Adrenal gland (tissue), 19 donors: ENCODE measurements at regions of chr6 and their contacts with region 1.

Region 1: GRCh38 chr6:30483677-30484279 is 5.5 kb upstream of the HLA-E start:
- DNase-seq: peak in 3 of 7 donors; percentile 52 to 64 (median 63)
- H3K4me3 ChIP-seq: no peak overlapping the region
- H3K27ac ChIP-seq: no peak overlapping the region
- H3K4me1 ChIP-seq: peaks cover 0 to under 1% of the 10 kb centered on the region in 2 donors
- H3K27me3 ChIP-seq: peaks cover 31% of the 10 kb centered on the region
- CTCF ChIP-seq: peak; percentile 46 to 74 (median 66)
- POLR2A ChIP-seq: no peak

Region 2: DNA sequence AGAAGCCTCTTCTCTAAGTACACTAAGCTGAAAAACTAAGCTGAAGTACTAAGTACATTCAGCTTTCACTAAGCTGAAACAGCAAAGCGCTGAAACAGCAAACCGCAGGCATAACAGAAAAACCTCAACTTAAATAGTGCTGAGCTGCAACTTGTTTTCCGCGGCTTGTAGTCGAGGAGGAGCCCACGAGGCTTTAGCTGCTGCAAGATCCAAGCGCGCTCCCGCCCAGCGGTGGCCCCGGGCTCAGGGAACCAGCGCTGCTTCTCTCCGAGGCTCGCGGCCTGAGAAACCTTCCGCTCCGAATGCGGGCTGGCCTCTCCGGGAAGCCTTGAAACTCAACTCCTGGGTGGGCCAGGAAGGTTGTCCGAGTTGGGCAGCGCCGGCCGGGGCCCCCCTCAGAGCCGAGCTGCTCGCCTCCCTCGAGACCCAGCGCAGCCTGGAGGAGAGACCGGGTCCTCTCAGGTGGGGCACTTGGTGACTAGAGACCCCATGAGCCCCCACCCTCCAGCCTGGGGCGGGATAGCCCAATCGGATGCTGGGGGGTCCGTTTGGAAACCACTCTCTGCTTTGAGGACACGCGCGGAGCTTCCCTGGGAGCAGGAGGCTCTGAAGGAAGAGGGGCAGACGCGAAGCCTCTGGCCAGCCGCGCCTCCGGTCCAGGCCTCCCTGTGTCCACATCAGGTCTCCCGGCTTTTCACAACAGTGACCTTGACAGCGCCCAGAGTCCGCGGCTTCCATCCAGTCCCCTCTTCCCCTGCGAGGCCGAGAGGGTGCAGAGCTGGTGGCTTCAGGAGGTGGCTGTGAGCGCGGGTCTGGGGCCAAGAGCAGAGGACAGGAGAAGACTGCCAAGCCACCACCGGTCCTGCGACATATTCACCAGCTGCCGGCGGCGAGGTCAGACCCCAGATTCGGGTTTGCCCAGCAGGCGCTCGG is 32.6 kb before region 1 on chr6:
- intact Hi-C with region 1: no loop called
- DNase-seq: peak in 5 of 7 donors; percentile 41 to 65 (median 59)
- H3K4me3 ChIP-seq: no peak overlapping the region
- H3K27ac ChIP-seq: no peak overlapping the region
- H3K4me1 ChIP-seq: no peaks in the 10 kb centered on the region
- H3K27me3 ChIP-seq: peaks cover 61% of the 10 kb centered on the region
- CTCF ChIP-seq: no peak
- POLR2A ChIP-seq: no peak

Region 3: DNA sequence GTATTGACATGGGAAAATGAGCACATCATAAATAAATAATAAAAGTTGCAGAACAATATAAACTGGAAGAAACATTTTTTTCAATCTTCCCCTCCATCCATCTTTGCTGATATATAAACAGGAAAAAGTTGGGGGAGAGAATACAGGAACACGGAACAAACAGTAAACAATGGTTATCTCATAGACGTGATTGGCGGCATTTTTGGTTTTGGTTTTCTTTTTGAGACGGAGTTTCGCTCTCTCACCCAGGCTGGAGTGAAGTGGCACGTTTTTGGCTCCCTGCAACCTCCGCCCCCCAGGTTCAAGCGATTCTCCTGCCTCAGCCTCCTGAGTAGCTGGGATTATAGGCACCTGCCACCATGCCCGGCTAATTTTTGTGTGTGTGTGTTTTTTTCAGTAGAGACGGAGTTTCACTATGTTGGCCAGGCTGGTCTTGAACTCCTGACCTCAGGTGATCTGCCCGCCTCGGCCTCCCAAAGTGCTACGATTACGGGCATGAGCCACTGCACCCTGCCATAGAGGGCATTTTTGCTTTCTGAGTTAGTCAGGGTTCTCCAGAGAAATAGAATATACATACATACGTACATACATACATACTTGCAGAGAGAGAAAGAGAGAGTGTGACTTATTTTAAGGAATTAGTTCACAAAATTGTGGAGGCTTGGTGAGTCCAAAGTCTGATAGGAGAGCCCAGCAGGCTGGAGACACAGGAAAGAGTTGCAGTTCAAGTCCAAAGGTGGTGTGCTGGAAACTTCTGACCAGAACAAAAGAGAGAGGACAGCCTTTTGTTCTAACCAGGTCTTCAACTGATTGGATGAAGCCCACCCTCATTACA is 49.9 kb after region 1 on chr6:
- intact Hi-C with region 1: loop called in 1 of 2 experiments (anchors 5 kb)
- DNase-seq: no peak
- H3K4me3 ChIP-seq: no peak overlapping the region
- H3K27ac ChIP-seq: no peak overlapping the region
- H3K4me1 ChIP-seq: peaks cover 0 to 8% of the 10 kb centered on the region in 2 donors
- H3K27me3 ChIP-seq: no peaks in the 10 kb centered on the region
- CTCF ChIP-seq: no peak
- POLR2A ChIP-seq: no peak

Region 4: GRCh38 chr6:30541515-30542403 is 58.0 kb after region 1 on chr6:
- intact Hi-C with region 1: loop called in 1 of 2 experiments (anchors 5 kb)
- DNase-seq: peak; percentile 65 to 92 (median 76)
- H3K4me3 ChIP-seq: peak overlapping the region in 1 of 4 donors; percentile 49
- H3K27ac ChIP-seq: peak overlapping the region in 1 of 5 donors; percentile 41
- H3K4me1 ChIP-seq: peaks cover 3 to 7% of the 10 kb centered on the region in 2 donors
- H3K27me3 ChIP-seq: no peaks in the 10 kb centered on the region
- CTCF ChIP-seq: peak; percentile 83 to 96 (median 88)
- POLR2A ChIP-seq: no peak

Region 5: DNA sequence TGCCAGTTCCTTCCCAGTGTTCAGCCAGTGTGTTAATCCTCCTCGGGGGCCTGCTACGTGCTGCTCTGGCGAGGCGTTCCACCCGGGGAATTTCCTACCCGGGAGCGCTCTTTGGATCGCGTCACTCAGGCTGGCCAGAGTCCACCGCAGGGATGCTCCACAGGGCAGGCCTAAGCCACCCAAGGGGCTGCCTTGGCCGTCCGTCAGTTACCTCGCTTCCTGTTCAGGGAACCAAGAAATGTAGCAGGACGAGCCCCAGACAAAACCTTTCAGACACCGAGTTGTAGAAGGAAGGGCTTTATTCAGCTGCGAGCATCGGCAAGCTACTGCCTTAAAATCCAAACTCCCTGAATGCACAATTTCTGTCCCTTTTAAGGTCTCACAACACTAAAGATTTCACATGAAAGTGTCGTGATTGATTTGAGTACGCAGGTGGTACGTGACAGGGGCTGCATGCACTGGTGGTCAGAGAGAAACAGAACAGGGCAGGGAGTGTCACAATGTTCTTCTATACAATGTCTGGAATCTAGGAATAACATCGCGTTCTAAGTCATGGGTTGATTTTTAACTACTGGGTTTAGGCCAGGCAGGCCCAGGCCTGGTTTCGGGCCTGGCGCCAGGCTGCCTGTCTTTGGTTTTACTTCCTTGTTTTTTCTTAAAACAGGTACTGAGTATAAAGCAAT is 702.4 kb after region 1 on chr6:
- intact Hi-C with region 1: no loop called
- DNase-seq: peak in 1 of 7 donors; percentile 28
- H3K4me3 ChIP-seq: no peak overlapping the region
- H3K27ac ChIP-seq: no peak overlapping the region
- H3K4me1 ChIP-seq: no peaks in the 10 kb centered on the region
- H3K27me3 ChIP-seq: no peaks in the 10 kb centered on the region
- CTCF ChIP-seq: no peak
- POLR2A ChIP-seq: no peak